ENCODE measurements at regions of chr13 and their contacts with region 1.

Region 1: DNA sequence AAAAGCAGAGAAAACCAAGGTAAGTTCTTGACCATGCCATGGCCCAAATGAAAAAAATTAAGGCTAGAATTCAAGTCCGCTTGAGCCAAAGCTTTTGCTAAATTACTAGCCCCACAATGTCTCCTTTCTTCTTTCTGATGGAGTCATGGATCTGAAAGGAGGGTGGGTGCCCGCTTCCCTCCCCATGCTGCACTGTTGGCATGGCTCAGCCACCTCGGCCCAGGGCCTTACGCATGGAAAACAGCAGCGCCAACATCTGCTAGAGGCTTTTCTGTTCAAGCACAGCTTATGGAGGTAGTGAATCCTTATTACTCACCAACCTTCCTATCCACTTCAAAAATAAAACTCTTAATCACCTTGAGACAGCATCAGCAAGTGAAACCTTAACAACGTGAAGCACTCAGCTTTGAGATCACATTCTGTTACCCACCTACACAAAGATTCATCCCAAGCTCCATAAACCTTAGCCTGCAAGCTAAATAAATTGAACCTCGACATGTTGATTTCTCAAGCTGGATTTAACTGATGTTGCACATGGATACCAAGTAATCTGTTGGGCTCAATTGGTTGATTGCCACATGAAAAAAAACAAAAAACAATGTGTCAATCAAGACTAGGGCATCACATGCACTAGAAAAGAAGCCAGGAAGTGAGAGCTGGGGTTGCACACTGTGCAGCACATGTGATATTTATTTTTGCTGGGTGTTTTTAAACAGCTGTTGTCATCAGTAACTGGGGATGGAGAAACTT is 43.4 kb downstream of the TPT1 start:
- DNase-seq: no peak
- ATAC-seq: no peak
- H3K4me3 ChIP-seq: no peak overlapping the region
- H3K27ac ChIP-seq: no peak overlapping the region
- H3K4me1 ChIP-seq: no peaks in the 10 kb centered on the region
- H3K27me3 ChIP-seq: peaks cover 0 to 4% (median 0%) of the 10 kb centered on the region in 4 donors
- CTCF ChIP-seq: no peak

Region 2: DNA sequence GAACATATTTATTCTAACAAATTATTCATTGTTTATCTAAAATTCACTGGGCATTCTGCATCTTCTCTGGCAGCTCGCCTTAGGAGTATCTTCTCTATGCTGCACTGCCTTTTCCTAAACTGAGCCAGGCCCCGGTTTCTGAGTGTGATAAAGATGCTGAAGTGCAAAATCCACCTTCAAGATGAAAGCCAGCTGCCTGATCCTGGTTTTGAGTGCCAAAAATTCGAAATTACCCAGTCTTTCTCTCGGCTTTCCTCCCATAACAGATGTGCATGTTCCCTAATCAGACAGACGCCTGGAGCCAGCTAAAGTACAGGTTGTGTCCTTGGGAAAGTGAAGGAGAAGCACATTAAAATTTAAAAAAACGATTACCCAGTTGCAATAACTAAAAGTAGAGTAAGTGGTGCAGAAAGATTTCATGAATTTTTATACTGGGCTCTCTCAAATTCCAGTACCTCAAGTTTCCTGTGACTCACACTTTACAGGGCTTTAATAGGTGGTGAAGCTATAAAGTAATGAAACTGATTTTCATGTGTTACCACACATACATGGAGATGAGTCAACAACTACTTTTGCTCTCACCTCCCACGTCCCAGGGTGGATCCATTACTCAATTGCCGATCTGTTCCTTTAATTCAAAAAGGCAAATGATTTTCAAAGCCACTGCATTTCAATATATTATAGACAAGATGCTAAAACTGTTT is 242.3 kb before region 1 on chr13:
- intact Hi-C with region 1: loop called in 1 of 3 experiments (anchors 10 kb)
- DNase-seq: no peak
- ATAC-seq: peak in 2 of 4 donors; percentile 51 to 67
- H3K4me3 ChIP-seq: no peak overlapping the region
- H3K27ac ChIP-seq: no peak overlapping the region
- H3K4me1 ChIP-seq: no peaks in the 10 kb centered on the region
- H3K27me3 ChIP-seq: no peaks in the 10 kb centered on the region
- CTCF ChIP-seq: no peak